Kidney (tissue), 22 donors: ENCODE measurements at regions of chr11 and their contacts with region 1.

Region 1: GRCh38 chr11:19566583-19567379 is 145.9 kb upstream of the NAV2 start:
- DNase-seq: no peak
- H3K4me3 ChIP-seq: no peak overlapping the region
- H3K27ac ChIP-seq: no peak overlapping the region
- H3K4me1 ChIP-seq: peaks cover 0 to 3% (median 0%) of the 10 kb centered on the region in 3 donors
- H3K27me3 ChIP-seq: no peaks in the 10 kb centered on the region
- CTCF ChIP-seq: no peak

Region 2: DNA sequence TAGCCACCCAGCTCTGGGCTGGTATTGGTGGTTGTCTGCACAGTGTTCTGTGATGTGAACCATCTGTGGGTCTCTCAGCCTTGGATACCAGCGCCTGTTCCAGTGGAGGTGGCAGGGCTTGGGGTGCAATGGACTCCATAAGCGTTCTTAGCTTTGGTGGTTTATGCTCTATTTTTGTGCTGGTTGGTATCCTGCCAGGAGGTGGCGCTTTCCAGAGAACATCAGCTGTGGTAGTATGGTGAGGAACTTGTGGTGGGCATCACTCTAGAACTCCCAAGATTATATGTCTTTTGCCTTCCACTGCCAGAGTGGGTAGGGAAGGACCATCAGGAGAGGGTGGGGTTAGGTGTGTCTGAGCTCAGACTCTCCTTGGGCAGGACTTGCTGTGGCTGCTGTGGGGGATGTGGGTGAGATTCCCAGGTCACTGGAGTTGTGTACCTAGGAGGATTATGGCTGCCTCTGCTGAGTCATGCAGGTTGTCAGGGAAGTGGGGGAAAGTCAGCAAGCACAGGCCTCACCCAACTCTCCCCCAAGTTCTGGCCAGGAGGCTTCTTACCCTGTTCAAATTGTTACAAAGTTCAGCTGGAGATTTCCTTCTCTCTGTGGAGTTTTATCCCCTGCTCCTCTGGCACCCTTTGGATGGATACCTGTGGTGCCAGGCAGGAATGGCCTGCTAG is 553.5 kb before region 1 on chr11:
- intact Hi-C with region 1: no loop called
- DNase-seq: no peak
- H3K4me3 ChIP-seq: no peak overlapping the region
- H3K27ac ChIP-seq: no peak overlapping the region
- H3K4me1 ChIP-seq: no peaks in the 10 kb centered on the region
- H3K27me3 ChIP-seq: no peaks in the 10 kb centered on the region
- CTCF ChIP-seq: no peak

Region 3: GRCh38 chr11:19460718-19461405 is 105.9 kb before region 1 on chr11:
- intact Hi-C with region 1: no loop called
- DNase-seq: peak in 3 of 5 donors; percentile 16 to 74 (median 17)
- H3K4me3 ChIP-seq: no peak overlapping the region
- H3K27ac ChIP-seq: no peak overlapping the region
- H3K4me1 ChIP-seq: peaks cover 0 to 2% (median 0%) of the 10 kb centered on the region in 3 donors
- H3K27me3 ChIP-seq: no peaks in the 10 kb centered on the region
- CTCF ChIP-seq: no peak

Region 4: DNA sequence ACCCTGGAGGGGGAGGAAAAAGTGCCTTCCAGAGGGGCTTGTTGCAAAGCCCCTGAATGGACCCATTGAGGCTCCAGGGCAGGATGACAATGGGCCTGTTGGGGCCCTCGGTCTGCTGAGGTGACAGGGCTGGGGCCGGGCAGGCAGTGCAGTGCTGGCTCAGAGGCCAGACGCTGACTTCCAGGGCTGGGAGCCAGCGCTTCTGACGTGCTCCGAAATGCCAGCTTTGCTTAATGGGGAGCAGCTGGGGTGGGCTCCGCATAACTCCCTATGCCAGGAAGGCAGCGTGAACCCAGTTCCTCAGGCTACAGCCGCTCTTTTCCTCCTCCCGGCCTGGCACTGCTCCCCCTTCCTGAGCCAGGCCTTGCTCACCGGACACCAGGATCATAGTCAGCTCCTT is 163.6 kb after region 1 on chr11:
- intact Hi-C with region 1: loop called (anchors 5 kb)
- DNase-seq: no peak
- H3K4me3 ChIP-seq: no peak overlapping the region
- H3K27ac ChIP-seq: no peak overlapping the region
- H3K4me1 ChIP-seq: no peaks in the 10 kb centered on the region
- H3K27me3 ChIP-seq: no peaks in the 10 kb centered on the region
- CTCF ChIP-seq: no peak